Endothelial cell of umbilical vein (primary cell): ENCODE measurements at regions of chr11 and their contacts with region 1.

Region 1: GRCh38 chr11:5380740-5381342 is 2.8 kb upstream of the OR51M1 start:
- DNase-seq: peak; percentile 69
- H3K4me3 ChIP-seq: no peak overlapping the region
- H3K27ac ChIP-seq: no peak overlapping the region
- H3K4me1 ChIP-seq: no peaks in the 10 kb centered on the region
- H3K27me3 ChIP-seq: peaks cover 0 to 2% of the 10 kb centered on the region in 2 experiments
- CTCF ChIP-seq: peak; percentile 67 to 84
- POLR2A ChIP-seq: no peak

Region 2: GRCh38 chr11:5007561-5007960 is 373.3 kb before region 1 on chr11:
- CTCF ChIA-PET with region 1: no interaction called
- POLR2A ChIA-PET with region 1: no interaction called
- dilution Hi-C with region 1: no loop called
- intact Hi-C with region 1: no loop called
- DNase-seq: no peak
- H3K4me3 ChIP-seq: no peak overlapping the region
- H3K27ac ChIP-seq: no peak overlapping the region
- H3K4me1 ChIP-seq: no peaks in the 10 kb centered on the region
- H3K27me3 ChIP-seq: no peaks in the 10 kb centered on the region
- CTCF ChIP-seq: no peak
- POLR2A ChIP-seq: no peak

Region 3: DNA sequence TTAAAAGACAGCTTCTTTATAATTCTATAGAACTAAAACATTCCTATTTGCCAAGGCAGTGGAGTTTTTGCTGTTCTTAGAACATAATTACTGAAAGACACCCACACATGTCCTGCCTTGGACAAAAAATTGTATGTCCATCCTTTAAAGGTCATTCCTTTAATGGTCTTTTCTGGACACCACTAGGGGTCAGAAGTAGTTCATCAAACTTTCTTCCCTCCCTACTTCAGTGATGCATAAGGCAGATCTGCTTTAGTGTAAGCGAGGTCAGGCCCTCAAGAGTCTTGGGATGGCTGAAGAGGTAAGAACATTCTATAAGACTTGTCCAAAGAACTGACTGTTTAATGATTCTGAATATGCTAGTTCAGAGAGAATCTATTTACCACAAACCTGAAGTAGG is 176.1 kb before region 1 on chr11:
- CTCF ChIA-PET with region 1: interaction called, 39 read pairs
- POLR2A ChIA-PET with region 1: no interaction called
- dilution Hi-C with region 1: no loop called
- intact Hi-C with region 1: loop called (anchors 1 kb)
- DNase-seq: peak; percentile 72
- H3K4me3 ChIP-seq: no peak overlapping the region
- H3K27ac ChIP-seq: no peak overlapping the region
- H3K4me1 ChIP-seq: no peaks in the 10 kb centered on the region
- H3K27me3 ChIP-seq: no peaks in the 10 kb centered on the region
- CTCF ChIP-seq: peak; percentile 32 to 42
- POLR2A ChIP-seq: no peak

Region 4: GRCh38 chr11:5304046-5304445 is 76.8 kb before region 1 on chr11:
- CTCF ChIA-PET with region 1: no interaction called
- POLR2A ChIA-PET with region 1: no interaction called
- dilution Hi-C with region 1: no loop called
- intact Hi-C with region 1: no loop called
- DNase-seq: no peak
- H3K4me3 ChIP-seq: no peak overlapping the region
- H3K27ac ChIP-seq: no peak overlapping the region
- H3K4me1 ChIP-seq: no peaks in the 10 kb centered on the region
- H3K27me3 ChIP-seq: no peaks in the 10 kb centered on the region
- CTCF ChIP-seq: no peak
- POLR2A ChIP-seq: no peak